Right ventricle myocardium inferior (tissue), 1 donor: ENCODE measurements at regions of chr17 and their contacts with region 1.

Region 1: DNA sequence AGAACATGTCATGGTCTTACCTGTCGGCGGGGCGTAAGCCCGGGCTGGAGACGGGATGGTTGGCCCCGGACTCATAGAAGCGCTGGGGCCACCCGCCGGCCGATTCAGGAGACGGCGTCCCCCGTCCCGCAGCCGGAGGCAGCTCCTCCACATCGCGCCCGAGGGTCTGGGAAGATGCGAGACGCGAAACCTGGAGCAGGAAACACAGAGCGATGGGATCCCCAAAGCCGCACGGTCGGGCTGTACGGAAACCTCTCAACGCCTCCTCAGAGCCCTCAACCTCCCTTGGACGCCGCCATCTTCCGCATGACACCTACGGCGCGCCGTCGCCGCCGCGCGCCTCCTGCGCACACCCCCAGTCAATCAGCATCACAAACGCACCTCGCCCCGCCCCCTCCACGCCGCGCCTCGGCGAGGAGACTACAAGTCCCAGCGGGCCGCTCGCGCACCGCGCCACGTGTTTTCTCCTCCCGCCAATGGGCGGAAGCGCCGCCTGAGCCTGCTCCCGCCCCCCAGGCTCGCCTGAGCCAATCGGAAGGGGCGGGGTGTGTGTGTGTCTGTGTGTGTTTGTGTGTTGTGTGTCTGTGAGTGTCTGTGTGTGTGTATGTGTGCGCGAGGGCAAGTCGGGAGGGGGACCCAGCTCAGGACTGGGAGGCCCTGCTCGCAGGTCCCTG is at the starts of genes ATPAF2 and GID4:
- DNase-seq: peak; percentile 100
- ATAC-seq: peak; percentile 97
- total RNA-seq, gene ATPAF2: 34.9 TPM
- total RNA-seq, gene GID4: 20.1 TPM

Region 2: GRCh38 chr17:17672453-17673368 is 366.3 kb before region 1 on chr17:
- intact Hi-C with region 1: loop called (anchors 5 kb)
- DNase-seq: no peak
- ATAC-seq: no peak